ENCODE measurements at regions of chr7 and their contacts with region 1.

Region 1: GRCh38 chr7:92228100-92228499 is 17.6 kb downstream of the KRIT1 start:
- DNase-seq: peak; percentile 15
- ATAC-seq: no peak
- H3K4me3 ChIP-seq: no peak overlapping the region
- H3K27ac ChIP-seq: no peak overlapping the region
- H3K4me1 ChIP-seq: no peaks in the 10 kb centered on the region
- H3K27me3 ChIP-seq: no peaks in the 10 kb centered on the region
- CTCF ChIP-seq: no peak
- POLR2A ChIP-seq: no peak
- RAD21 ChIP-seq: no peak

Region 2: GRCh38 chr7:92359801-92360200 is 131.7 kb after region 1 on chr7:
- CTCF ChIA-PET with region 1: no interaction called
- POLR2A ChIA-PET with region 1: no interaction called
- dilution Hi-C with region 1: no loop called
- in situ Hi-C with region 1: no loop called
- intact Hi-C with region 1: loop called (anchors 10 kb)
- DNase-seq: peak; percentile 10
- ATAC-seq: peak; percentile 32
- H3K4me3 ChIP-seq: no peak overlapping the region
- H3K27ac ChIP-seq: no peak overlapping the region
- H3K4me1 ChIP-seq: peaks cover 1% of the 10 kb centered on the region; the same call in 1 of the 2 replicates
- H3K27me3 ChIP-seq: no peaks in the 10 kb centered on the region
- CTCF ChIP-seq: no peak
- POLR2A ChIP-seq: no peak
- RAD21 ChIP-seq: no peak